Body of pancreas (tissue), 4 donors: ENCODE measurements at regions of chr3 and their contacts with region 1.

Region 1: GRCh38 chr3:170414202-170414663 is 4.4 kb upstream of the CLDN11 start:
- DNase-seq: peak; percentile 23 to 51 (median 43)
- ATAC-seq: no peak
- H3K4me3 ChIP-seq: no peak overlapping the region
- H3K27ac ChIP-seq: no peak overlapping the region
- H3K4me1 ChIP-seq: peaks cover 11% of the 10 kb centered on the region
- H3K27me3 ChIP-seq: peaks cover 0 to 2% of the 10 kb centered on the region in 2 donors
- CTCF ChIP-seq: peak; percentile 86 to 95 (median 90)
- POLR2A ChIP-seq: no peak

Region 2: GRCh38 chr3:169980055-169980454 is 434.2 kb before region 1 on chr3:
- intact Hi-C with region 1: no loop called
- DNase-seq: no peak
- ATAC-seq: peak; percentile 18
- H3K4me3 ChIP-seq: no peak overlapping the region
- H3K27ac ChIP-seq: peak overlapping the region in 1 of 4 donors; percentile 41
- H3K4me1 ChIP-seq: no peaks in the 10 kb centered on the region
- H3K27me3 ChIP-seq: no peaks in the 10 kb centered on the region
- CTCF ChIP-seq: no peak
- POLR2A ChIP-seq: no peak

Region 3: DNA sequence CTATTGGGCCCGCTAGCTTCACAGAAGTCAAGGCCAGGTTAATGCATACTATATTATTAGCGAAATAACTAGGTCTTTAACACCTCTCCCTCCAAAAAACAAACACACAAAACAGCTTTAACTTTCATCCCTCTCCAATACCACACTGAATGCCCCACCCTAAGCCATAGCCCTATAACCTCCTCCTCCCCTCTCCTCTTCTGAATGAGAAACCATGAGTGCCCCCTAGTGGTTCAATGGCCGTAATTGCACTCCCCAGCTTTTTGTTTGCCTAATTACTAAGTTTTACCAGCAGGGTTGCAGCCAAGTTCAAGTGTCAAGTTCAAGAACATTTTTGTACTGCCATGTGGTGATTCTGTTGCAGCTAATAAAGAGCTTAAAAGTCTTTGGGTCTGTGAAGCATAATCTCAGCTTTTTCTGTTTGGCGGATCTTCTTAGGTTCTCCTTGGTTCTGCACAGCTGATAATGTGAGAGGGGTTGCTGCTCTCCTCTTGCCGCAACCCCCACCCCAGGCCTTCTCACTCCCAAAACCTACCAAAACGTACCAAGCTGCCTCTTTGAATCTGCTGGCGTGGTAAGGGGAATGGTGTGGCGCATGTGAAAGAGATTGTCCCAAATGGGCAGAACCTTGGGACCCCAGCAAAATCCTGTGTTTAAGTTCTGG is 397.8 kb after region 1 on chr3:
- intact Hi-C with region 1: loop called (anchors 10 kb)
- DNase-seq: peak; percentile 70 to 81 (median 76)
- ATAC-seq: peak; percentile 75
- H3K4me3 ChIP-seq: no peak overlapping the region
- H3K27ac ChIP-seq: no peak overlapping the region
- H3K4me1 ChIP-seq: peaks cover 18% of the 10 kb centered on the region
- H3K27me3 ChIP-seq: no peaks in the 10 kb centered on the region
- CTCF ChIP-seq: peak; percentile 66 to 99 (median 95)
- POLR2A ChIP-seq: no peak

Region 4: GRCh38 chr3:170941551-170941950 is 527.3 kb after region 1 on chr3:
- intact Hi-C with region 1: no loop called
- DNase-seq: no peak
- ATAC-seq: no peak
- H3K4me3 ChIP-seq: no peak overlapping the region
- H3K27ac ChIP-seq: no peak overlapping the region
- H3K4me1 ChIP-seq: no peaks in the 10 kb centered on the region
- H3K27me3 ChIP-seq: no peaks in the 10 kb centered on the region
- CTCF ChIP-seq: no peak
- POLR2A ChIP-seq: no peak